ENCODE measurements at regions of chr22 and their contacts with region 1.

Region 1: DNA sequence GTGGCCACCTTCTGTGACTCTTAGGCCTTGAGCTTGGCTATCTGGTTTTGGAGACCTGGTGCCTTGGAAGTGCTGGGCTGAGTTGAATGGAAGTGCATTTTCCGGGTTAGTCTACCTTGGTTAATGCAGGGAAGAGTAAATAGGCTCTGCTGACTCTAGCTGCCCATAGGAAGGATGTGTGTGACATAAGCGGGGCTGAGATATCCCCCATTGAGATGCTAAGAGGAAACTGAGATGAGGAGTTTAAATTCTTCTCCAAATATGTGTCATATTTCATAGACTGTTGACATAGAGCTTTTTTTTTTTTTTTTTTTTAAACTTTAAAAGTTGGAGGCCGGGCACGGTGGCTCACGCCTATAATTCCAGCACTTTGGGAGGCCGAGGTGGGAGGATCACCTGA is 30.8 kb downstream of the ZNRF3 start:
- DNase-seq: no peak
- ATAC-seq: no peak
- H3K4me3 Mint-ChIP-seq: no peak overlapping the region
- H3K27ac Mint-ChIP-seq: no peak overlapping the region
- H3K4me1 Mint-ChIP-seq: peaks cover 15% of the 10 kb centered on the region
- H3K27me3 Mint-ChIP-seq: peaks cover 41% of the 10 kb centered on the region

Region 2: GRCh38 chr22:28714043-28714442 is 200.2 kb before region 1 on chr22:
- CTCF ChIA-PET with region 1: no interaction called
- POLR2A ChIA-PET with region 1: no interaction called
- intact Hi-C with region 1: no loop called
- DNase-seq: no peak
- ATAC-seq: peak; percentile 74
- H3K4me3 Mint-ChIP-seq: no peak overlapping the region
- H3K27ac Mint-ChIP-seq: no peak overlapping the region
- H3K4me1 Mint-ChIP-seq: peaks cover 9% of the 10 kb centered on the region
- H3K27me3 Mint-ChIP-seq: no peaks in the 10 kb centered on the region

Region 3: DNA sequence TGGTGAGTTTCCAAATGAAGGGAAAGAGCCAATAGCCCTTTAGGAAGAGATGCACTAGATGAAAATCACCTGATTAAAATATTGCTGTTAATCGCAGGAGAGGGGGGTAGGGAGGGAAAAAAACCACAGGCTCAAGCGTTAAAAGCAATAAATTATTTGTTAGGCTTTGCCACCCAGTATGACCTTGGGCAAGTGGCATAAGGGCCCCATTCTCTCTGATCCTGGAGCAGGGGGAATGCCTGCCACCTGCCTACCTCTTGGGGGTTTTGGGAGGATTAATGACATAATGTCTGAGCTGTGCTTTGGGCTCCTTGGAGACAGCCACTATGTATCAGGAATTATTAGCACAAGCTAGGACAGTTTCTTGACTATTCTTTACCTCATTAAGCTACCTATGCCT is 49.2 kb after region 1 on chr22:
- CTCF ChIA-PET with region 1: no interaction called
- POLR2A ChIA-PET with region 1: no interaction called
- intact Hi-C with region 1: no loop called
- DNase-seq: no peak
- ATAC-seq: no peak
- H3K4me3 Mint-ChIP-seq: no peak overlapping the region
- H3K27ac Mint-ChIP-seq: no peak overlapping the region
- H3K4me1 Mint-ChIP-seq: peaks cover 23% of the 10 kb centered on the region
- H3K27me3 Mint-ChIP-seq: peaks cover 68% of the 10 kb centered on the region

Region 4: GRCh38 chr22:28995551-28995950 is 81.3 kb after region 1 on chr22:
- CTCF ChIA-PET with region 1: no interaction called
- POLR2A ChIA-PET with region 1: interaction called, 10 read pairs
- intact Hi-C with region 1: no loop called
- DNase-seq: no peak
- ATAC-seq: no peak
- H3K4me3 Mint-ChIP-seq: no peak overlapping the region
- H3K27ac Mint-ChIP-seq: no peak overlapping the region
- H3K4me1 Mint-ChIP-seq: no peaks in the 10 kb centered on the region
- H3K27me3 Mint-ChIP-seq: peaks cover 3% of the 10 kb centered on the region

Region 5: GRCh38 chr22:29011240-29012100 is 97.3 kb after region 1 on chr22:
- CTCF ChIA-PET with region 1: no interaction called
- POLR2A ChIA-PET with region 1: no interaction called
- intact Hi-C with region 1: no loop called
- DNase-seq: no peak
- ATAC-seq: no peak
- H3K4me3 Mint-ChIP-seq: no peak overlapping the region
- H3K27ac Mint-ChIP-seq: no peak overlapping the region
- H3K4me1 Mint-ChIP-seq: peaks cover 2% of the 10 kb centered on the region
- H3K27me3 Mint-ChIP-seq: peaks cover 13% of the 10 kb centered on the region

Measured in activated CD4-positive, alpha-beta T cell treated with anti-CD3 and anti-CD28 coated beads for 36 hours (primary cell).